ENCODE measurements at regions of chr6 and their contacts with region 1.

Region 1: GRCh38 chr6:52284460-52285176 is at the start of gene MCM3:
- DNase-seq: peak; percentile 98
- H3K4me3 Mint-ChIP-seq: no peak within 1 kb of the TSS
- H3K27ac Mint-ChIP-seq: no peak within 1 kb of the TSS
- H3K4me1 Mint-ChIP-seq: peaks cover 51% of the 10 kb centered on the region
- H3K27me3 Mint-ChIP-seq: no peaks in the 10 kb centered on the region
- total RNA-seq, gene MCM3: 256 to 258 TPM

Region 2: DNA sequence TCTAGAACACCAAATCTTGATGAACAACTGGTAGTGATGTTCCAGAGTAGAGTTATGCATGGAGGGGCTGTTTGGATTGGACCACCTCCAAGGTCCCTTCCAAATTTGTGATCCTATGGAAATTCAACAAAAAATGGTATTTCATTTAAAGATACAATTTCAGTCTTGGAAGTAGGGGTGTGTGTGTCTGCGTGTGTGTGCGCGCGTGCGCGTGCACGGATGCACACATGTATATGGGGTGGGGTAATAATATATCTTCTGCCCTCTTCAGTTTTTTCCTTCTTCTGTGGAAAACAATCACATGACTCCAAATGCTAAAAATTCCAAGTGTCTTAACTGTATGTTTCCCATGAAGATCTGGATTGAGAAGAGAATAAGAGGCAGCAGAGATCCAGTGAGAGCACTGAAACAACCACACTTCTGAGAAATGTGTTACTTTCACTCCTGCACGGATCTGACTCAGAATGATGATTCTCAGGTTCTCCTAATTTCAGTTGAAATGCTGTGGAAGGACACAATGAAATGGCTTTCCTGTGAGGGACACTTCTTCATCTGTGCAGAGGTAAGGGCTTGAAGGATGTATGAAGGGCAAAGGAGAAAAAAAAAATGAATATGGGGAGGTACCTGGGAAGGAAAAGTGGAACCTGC is 29.8 kb before region 1 on chr6:
- CTCF ChIA-PET with region 1: interaction called, 3 read pairs
- intact Hi-C with region 1: loop called (anchors 1 kb)
- DNase-seq: peak; percentile 37
- H3K4me3 Mint-ChIP-seq: no peak overlapping the region
- H3K27ac Mint-ChIP-seq: no peak overlapping the region
- H3K4me1 Mint-ChIP-seq: peaks cover 43% of the 10 kb centered on the region
- H3K27me3 Mint-ChIP-seq: peaks cover 10% of the 10 kb centered on the region

Region 3: GRCh38 chr6:52297433-52297832 is 12.8 kb after region 1 on chr6:
- CTCF ChIA-PET with region 1: interaction called, 16 read pairs
- intact Hi-C with region 1: loop called (anchors 1 kb)
- DNase-seq: peak; percentile 51
- H3K4me3 Mint-ChIP-seq: no peak overlapping the region
- H3K27ac Mint-ChIP-seq: peak overlapping the region; percentile 60
- H3K4me1 Mint-ChIP-seq: peaks cover 35% of the 10 kb centered on the region
- H3K27me3 Mint-ChIP-seq: no peaks in the 10 kb centered on the region

Region 4: GRCh38 chr6:52361945-52362442 is 77.4 kb after region 1 on chr6 and contains the start of gene PAQR8:
- CTCF ChIA-PET with region 1: interaction called, 57 read pairs
- intact Hi-C with region 1: loop called (anchors 1 kb)
- DNase-seq: peak; percentile 81
- H3K4me3 Mint-ChIP-seq: peak within 1 kb of the TSS; percentile 94
- H3K27ac Mint-ChIP-seq: peak within 1 kb of the TSS; percentile 91
- H3K4me1 Mint-ChIP-seq: peaks cover 38% of the 10 kb centered on the region
- H3K27me3 Mint-ChIP-seq: no peaks in the 10 kb centered on the region
- total RNA-seq, gene PAQR8: 6.8 to 9.2 TPM

Region 5: DNA sequence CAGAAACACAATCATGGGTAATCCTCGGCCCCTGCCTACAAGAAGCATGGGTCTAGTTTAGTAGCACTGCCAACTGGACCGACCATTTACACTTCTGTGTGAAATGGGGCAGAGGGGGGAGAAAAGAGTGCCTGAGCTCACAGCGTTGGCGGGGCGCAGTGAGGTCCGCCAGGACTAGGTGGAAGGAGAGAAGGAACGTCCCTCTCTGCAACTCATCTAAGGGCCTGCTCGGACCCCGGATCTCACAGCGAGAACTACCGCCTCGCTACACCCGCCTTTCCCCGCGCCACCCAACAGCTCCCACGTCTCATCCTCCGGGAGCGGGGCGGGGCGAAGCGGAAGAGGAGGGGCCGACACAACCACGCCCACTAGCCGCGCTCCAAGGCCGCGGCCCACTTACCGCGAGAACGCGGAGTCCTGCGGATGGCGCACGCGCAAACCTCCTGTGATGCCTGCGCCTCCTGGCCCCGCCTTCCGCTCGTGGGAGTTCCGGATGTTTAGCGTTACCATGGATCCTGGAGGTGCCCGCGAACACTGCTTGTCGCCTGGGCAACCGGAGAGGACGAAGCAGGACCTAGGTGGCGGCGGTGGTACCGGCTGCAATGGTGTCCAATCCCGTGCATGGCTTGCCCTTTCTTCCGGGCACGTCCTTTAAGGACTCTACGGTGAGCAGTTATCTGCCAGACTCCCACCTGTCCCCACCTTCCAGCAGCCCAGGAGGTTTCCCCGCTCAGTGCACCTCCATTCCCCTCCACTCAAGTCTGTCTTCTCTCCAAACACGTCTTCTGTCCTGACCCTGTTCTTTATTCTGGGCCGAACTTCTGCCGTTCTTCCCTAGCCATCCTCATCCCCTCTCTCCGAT is 135.4 kb after region 1 on chr6 and contains the start of gene EFHC1:
- CTCF ChIA-PET with region 1: interaction called, 32 read pairs
- intact Hi-C with region 1: loop called (anchors 1 kb)
- DNase-seq: peak; percentile 99
- H3K4me3 Mint-ChIP-seq: no peak within 1 kb of the TSS
- H3K27ac Mint-ChIP-seq: peak within 1 kb of the TSS; percentile 88
- H3K4me1 Mint-ChIP-seq: peaks cover 22% of the 10 kb centered on the region
- H3K27me3 Mint-ChIP-seq: no peaks in the 10 kb centered on the region
- total RNA-seq, gene EFHC1: 1.2 to 3.1 TPM

Region 6: GRCh38 chr6:52664186-52664990 is 379.8 kb after region 1 on chr6:
- CTCF ChIA-PET with region 1: interaction called, 15 read pairs
- intact Hi-C with region 1: loop called (anchors 1 kb)
- DNase-seq: peak; percentile 86
- H3K4me3 Mint-ChIP-seq: no peak overlapping the region
- H3K27ac Mint-ChIP-seq: no peak overlapping the region
- H3K4me1 Mint-ChIP-seq: peaks cover 3% of the 10 kb centered on the region
- H3K27me3 Mint-ChIP-seq: no peaks in the 10 kb centered on the region

Measured in activated naive CD4-positive, alpha-beta T cell treated with anti-CD3 and anti-CD28 coated beads for 36 hours (primary cell).